GM12878 (cell line): ENCODE measurements at regions of chr3 and their contacts with region 1.

Region 1: DNA sequence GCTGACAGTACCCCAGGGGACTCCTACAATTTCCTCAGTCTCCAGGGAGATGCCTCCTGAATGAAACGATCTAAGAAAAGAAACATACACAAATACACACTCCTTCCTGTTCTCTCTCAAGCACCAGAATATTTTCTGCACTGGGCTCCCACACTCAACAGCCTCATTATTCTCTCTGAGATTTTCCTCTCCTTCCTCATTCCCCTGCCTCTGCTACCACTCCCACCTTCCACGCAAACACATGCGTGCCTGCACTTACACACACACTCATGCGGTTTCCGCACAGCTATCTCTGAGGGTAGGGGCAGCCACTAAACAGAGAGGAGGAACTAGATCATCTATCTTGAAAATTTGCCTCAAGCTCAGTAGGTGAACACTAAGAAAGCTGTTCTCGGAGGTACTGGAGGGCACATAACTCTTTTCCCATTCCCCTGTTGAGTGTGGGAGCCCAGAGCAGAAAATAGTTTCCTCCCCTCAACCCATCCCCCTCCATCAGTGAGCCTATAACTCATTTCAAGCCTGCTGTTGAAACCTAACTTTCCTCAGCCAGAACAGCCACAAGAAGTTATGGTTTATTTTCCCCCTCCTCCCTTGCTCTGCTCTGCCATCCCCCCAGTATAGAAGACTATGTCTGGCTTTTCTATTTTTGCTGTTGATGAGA is 30.5 kb upstream of the TIPARP start:
- DNase-seq: peak; percentile 76
- ATAC-seq: peak; percentile 90
- H3K4me3 ChIP-seq: peak overlapping the region; percentile 8; the same call in 1 of the 2 replicates
- H3K27ac ChIP-seq: peak overlapping the region; percentile 67
- H3K4me1 ChIP-seq: peaks cover 26% of the 10 kb centered on the region
- H3K27me3 ChIP-seq: no peaks in the 10 kb centered on the region
- CTCF ChIP-seq: no peak
- EP300 ChIP-seq: peak; percentile 81 to 84
- POLR2A ChIP-seq: no peak
- RAD21 ChIP-seq: no peak

Region 2: GRCh38 chr3:156630081-156630772 is 13.6 kb before region 1 on chr3:
- CTCF ChIA-PET with region 1: interaction called, 4 read pairs
- POLR2A ChIA-PET with region 1: interaction called, 4 read pairs
- RAD21 ChIA-PET with region 1: interaction called, 3 read pairs
- SMC1A ChIA-PET with region 1: interaction called, 19 read pairs
- in situ Hi-C with region 1: no loop called
- intact Hi-C with region 1: no loop called
- DNase-seq: no peak
- ATAC-seq: no peak
- H3K4me3 ChIP-seq: no peak overlapping the region
- H3K27ac ChIP-seq: no peak overlapping the region
- H3K4me1 ChIP-seq: no peaks in the 10 kb centered on the region
- H3K27me3 ChIP-seq: no peaks in the 10 kb centered on the region
- CTCF ChIP-seq: no peak
- EP300 ChIP-seq: no peak
- POLR2A ChIP-seq: no peak
- RAD21 ChIP-seq: no peak

Region 3: GRCh38 chr3:156655819-156656550 is 12.1 kb after region 1 on chr3:
- CTCF ChIA-PET with region 1: interaction called, 40 read pairs
- POLR2A ChIA-PET with region 1: interaction called, 28 read pairs
- RAD21 ChIA-PET with region 1: interaction called, 31 read pairs
- SMC1A ChIA-PET with region 1: interaction called, 46 read pairs
- in situ Hi-C with region 1: no loop called
- intact Hi-C with region 1: no loop called
- DNase-seq: no peak
- ATAC-seq: peak; percentile 58
- H3K4me3 ChIP-seq: 0 out of 2 replicates have a peak overlapping the region, but pooled peaks have one; percentile 4
- H3K27ac ChIP-seq: peak overlapping the region; percentile 56
- H3K4me1 ChIP-seq: peaks cover 25% of the 10 kb centered on the region
- H3K27me3 ChIP-seq: no peaks in the 10 kb centered on the region
- CTCF ChIP-seq: no peak
- EP300 ChIP-seq: no peak
- POLR2A ChIP-seq: no peak
- RAD21 ChIP-seq: no peak

Region 4: GRCh38 chr3:156705761-156706631 is 62.1 kb after region 1 on chr3:
- CTCF ChIA-PET with region 1: no interaction called
- POLR2A ChIA-PET with region 1: no interaction called
- RAD21 ChIA-PET with region 1: no interaction called
- SMC1A ChIA-PET with region 1: no interaction called
- in situ Hi-C with region 1: no loop called
- intact Hi-C with region 1: no loop called
- DNase-seq: no peak
- ATAC-seq: peak; percentile 78
- H3K4me3 ChIP-seq: no peak overlapping the region
- H3K27ac ChIP-seq: no peak overlapping the region; the same call in 1 of the 2 replicates
- H3K4me1 ChIP-seq: peaks cover 10% of the 10 kb centered on the region; the same call in 1 of the 2 replicates
- H3K27me3 ChIP-seq: no peaks in the 10 kb centered on the region
- CTCF ChIP-seq: no peak
- EP300 ChIP-seq: no peak
- POLR2A ChIP-seq: no peak
- RAD21 ChIP-seq: no peak

Region 5: GRCh38 chr3:156843440-156843808 is 199.6 kb after region 1 on chr3:
- CTCF ChIA-PET with region 1: no interaction called
- POLR2A ChIA-PET with region 1: no interaction called
- RAD21 ChIA-PET with region 1: no interaction called
- SMC1A ChIA-PET with region 1: no interaction called
- in situ Hi-C with region 1: no loop called
- intact Hi-C with region 1: no loop called
- DNase-seq: no peak
- ATAC-seq: no peak
- H3K4me3 ChIP-seq: no peak overlapping the region
- H3K27ac ChIP-seq: no peak overlapping the region
- H3K4me1 ChIP-seq: no peaks in the 10 kb centered on the region
- H3K27me3 ChIP-seq: no peaks in the 10 kb centered on the region
- CTCF ChIP-seq: no peak
- EP300 ChIP-seq: no peak
- POLR2A ChIP-seq: no peak
- RAD21 ChIP-seq: no peak

Region 6: DNA sequence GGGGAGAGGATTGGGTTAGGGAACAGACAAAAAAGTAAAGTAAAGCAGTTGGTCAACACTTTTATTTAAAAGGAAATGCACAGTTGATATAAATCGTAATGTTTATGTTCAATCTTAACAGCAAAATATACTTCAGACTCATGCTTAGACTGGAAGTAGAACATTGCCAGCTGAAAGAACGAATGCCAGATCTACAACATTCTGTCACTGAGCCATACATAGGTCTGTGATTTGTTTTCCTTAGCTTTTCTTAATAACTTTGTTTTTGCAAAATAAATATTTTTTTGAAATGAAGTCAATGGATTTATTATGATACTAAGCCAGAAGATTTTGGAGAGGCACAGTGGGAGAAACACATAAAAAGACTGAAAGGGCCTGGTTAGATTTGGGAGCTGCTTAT is 244.3 kb after region 1 on chr3:
- CTCF ChIA-PET with region 1: no interaction called
- POLR2A ChIA-PET with region 1: no interaction called
- RAD21 ChIA-PET with region 1: no interaction called
- SMC1A ChIA-PET with region 1: no interaction called
- in situ Hi-C with region 1: no loop called
- intact Hi-C with region 1: no loop called
- DNase-seq: no peak
- ATAC-seq: no peak
- H3K4me3 ChIP-seq: no peak overlapping the region
- H3K27ac ChIP-seq: no peak overlapping the region
- H3K4me1 ChIP-seq: no peaks in the 10 kb centered on the region
- H3K27me3 ChIP-seq: no peaks in the 10 kb centered on the region
- CTCF ChIP-seq: no peak
- EP300 ChIP-seq: no peak
- POLR2A ChIP-seq: no peak
- RAD21 ChIP-seq: no peak